ENCODE measurements at regions of chr2 and their contacts with region 1.

Region 1: GRCh38 chr2:83196225-83196624 is 1262.9 kb downstream of the SUCLG1 start:
- DNase-seq: peak; percentile 62
- H3K4me3 ChIP-seq: no peak overlapping the region
- H3K27ac ChIP-seq: peak overlapping the region; percentile 34
- H3K4me1 ChIP-seq: peaks cover 7% of the 10 kb centered on the region
- H3K27me3 ChIP-seq: no peaks in the 10 kb centered on the region
- CTCF ChIP-seq: peak; percentile 42 to 51
- POLR2A ChIP-seq: no peak

Region 2: DNA sequence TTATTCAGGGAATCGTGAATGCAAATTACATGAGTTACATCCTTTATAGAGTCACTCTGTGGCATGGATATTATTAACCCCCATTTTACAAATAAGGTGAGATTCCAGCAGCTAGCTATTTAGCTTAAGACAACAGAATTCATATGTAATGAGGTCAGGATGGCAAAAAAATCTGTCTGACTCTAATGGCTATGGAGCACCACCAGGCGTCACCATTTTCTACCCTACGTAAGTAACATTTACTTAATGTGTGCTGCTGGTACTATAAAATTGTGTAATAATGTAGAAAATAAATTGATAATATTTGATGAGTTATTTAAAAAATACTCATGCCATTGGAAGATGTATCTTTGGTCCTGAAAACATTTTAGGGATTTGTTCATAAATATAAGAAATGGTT is 851.6 kb before region 1 on chr2:
- CTCF ChIA-PET with region 1: interaction called, 19 read pairs
- POLR2A ChIA-PET with region 1: no interaction called
- dilution Hi-C with region 1: no loop called
- intact Hi-C with region 1: loop called (anchors 2 kb)
- DNase-seq: peak; percentile 23
- H3K4me3 ChIP-seq: no peak overlapping the region
- H3K27ac ChIP-seq: no peak overlapping the region
- H3K4me1 ChIP-seq: no peaks in the 10 kb centered on the region
- H3K27me3 ChIP-seq: no peaks in the 10 kb centered on the region
- CTCF ChIP-seq: no peak
- POLR2A ChIP-seq: no peak

Region 3: GRCh38 chr2:82690757-82691411 is 505.3 kb before region 1 on chr2:
- CTCF ChIA-PET with region 1: interaction called, 13 read pairs
- POLR2A ChIA-PET with region 1: no interaction called
- dilution Hi-C with region 1: no loop called
- intact Hi-C with region 1: loop called (anchors 5 kb)
- DNase-seq: peak; percentile 93
- H3K4me3 ChIP-seq: no peak overlapping the region
- H3K27ac ChIP-seq: peak overlapping the region; percentile 68
- H3K4me1 ChIP-seq: peaks cover 34% of the 10 kb centered on the region
- H3K27me3 ChIP-seq: no peaks in the 10 kb centered on the region
- CTCF ChIP-seq: no peak
- POLR2A ChIP-seq: peak; percentile 41

Region 4: DNA sequence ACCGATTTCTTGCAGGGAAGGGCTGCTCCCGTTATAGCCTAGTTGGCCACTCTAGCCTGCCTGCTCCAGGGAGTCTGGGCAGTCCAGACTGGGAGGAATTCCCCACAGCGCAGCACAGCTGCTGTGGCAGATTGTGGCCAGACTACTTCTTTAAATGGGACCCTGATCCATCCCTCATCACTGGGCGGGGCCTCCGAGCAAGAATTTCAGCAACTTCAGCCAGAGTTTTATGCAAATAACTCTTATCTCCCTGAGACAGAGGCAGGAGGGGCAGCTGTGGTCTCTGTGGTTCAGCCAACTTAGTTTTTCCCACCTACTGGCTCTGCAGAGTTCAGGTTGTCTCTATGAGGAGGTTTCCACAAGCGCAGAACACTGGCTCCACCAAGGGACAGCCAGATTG is 320.4 kb before region 1 on chr2:
- CTCF ChIA-PET with region 1: interaction called, 3 read pairs
- POLR2A ChIA-PET with region 1: no interaction called
- dilution Hi-C with region 1: no loop called
- intact Hi-C with region 1: loop called (anchors 10 kb)
- DNase-seq: no peak
- H3K4me3 ChIP-seq: no peak overlapping the region
- H3K27ac ChIP-seq: no peak overlapping the region
- H3K4me1 ChIP-seq: no peaks in the 10 kb centered on the region
- H3K27me3 ChIP-seq: no peaks in the 10 kb centered on the region
- CTCF ChIP-seq: no peak
- POLR2A ChIP-seq: no peak

Region 5: GRCh38 chr2:83081826-83082690 is 114.2 kb before region 1 on chr2:
- CTCF ChIA-PET with region 1: interaction called, 21 read pairs
- POLR2A ChIA-PET with region 1: interaction called, 4 read pairs
- dilution Hi-C with region 1: no loop called
- intact Hi-C with region 1: loop called (anchors 1 kb)
- DNase-seq: peak; percentile 100
- H3K4me3 ChIP-seq: peak overlapping the region in 1 of 3 experiments; percentile 28
- H3K27ac ChIP-seq: peak overlapping the region; percentile 94
- H3K4me1 ChIP-seq: peaks cover 25% of the 10 kb centered on the region
- H3K27me3 ChIP-seq: no peaks in the 10 kb centered on the region
- CTCF ChIP-seq: no peak
- POLR2A ChIP-seq: peak; percentile 67

Region 6: DNA sequence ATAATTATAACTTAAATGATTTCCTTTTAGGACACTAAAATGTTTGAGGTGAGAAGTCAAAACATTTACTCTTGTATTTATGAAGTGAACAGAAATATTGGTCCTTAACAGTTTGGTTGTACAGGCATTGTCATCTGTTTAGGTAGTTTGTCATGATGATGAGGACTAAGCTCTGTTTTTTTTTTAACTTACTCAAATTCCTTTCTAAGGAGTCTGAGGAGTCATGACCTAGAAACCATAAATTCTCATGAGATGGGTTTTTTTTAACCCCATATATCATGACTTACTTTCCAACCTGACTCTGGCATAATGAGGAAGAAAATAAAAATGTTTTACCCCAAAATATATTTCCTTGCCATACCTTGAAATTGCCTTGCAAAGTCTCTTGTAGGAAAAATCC is 86.6 kb after region 1 on chr2:
- CTCF ChIA-PET with region 1: no interaction called
- POLR2A ChIA-PET with region 1: no interaction called
- dilution Hi-C with region 1: no loop called
- intact Hi-C with region 1: no loop called
- DNase-seq: no peak
- H3K4me3 ChIP-seq: no peak overlapping the region
- H3K27ac ChIP-seq: no peak overlapping the region
- H3K4me1 ChIP-seq: no peaks in the 10 kb centered on the region
- H3K27me3 ChIP-seq: no peaks in the 10 kb centered on the region
- CTCF ChIP-seq: no peak
- POLR2A ChIP-seq: no peak

Region 7: DNA sequence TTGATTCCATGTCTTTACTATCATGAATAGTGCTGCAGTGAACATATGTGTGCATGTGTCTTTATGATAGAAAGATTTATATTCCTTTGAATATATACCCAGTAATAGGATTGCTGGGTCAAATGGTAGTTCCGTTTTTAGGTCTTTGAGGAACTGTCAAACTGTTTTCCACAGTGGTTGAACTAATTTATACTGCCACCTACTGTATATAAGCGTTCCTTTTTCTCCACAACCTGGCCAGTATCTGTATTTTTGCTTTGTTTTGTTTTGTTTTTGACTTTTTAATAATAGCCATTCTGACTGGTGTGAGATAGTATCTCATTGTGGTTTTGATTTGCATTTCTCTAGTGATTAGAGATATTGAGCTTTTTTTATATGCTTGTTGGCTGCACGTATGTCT is 621.3 kb after region 1 on chr2:
- CTCF ChIA-PET with region 1: no interaction called
- POLR2A ChIA-PET with region 1: no interaction called
- dilution Hi-C with region 1: no loop called
- intact Hi-C with region 1: loop called (anchors 5 kb)
- DNase-seq: peak; percentile 6
- H3K4me3 ChIP-seq: no peak overlapping the region
- H3K27ac ChIP-seq: no peak overlapping the region
- H3K4me1 ChIP-seq: no peaks in the 10 kb centered on the region
- H3K27me3 ChIP-seq: no peaks in the 10 kb centered on the region
- CTCF ChIP-seq: no peak
- POLR2A ChIP-seq: no peak

Measured in endothelial cell of umbilical vein (primary cell).